ENCODE measurements at regions of chr5 and their contacts with region 1.

Region 1: DNA sequence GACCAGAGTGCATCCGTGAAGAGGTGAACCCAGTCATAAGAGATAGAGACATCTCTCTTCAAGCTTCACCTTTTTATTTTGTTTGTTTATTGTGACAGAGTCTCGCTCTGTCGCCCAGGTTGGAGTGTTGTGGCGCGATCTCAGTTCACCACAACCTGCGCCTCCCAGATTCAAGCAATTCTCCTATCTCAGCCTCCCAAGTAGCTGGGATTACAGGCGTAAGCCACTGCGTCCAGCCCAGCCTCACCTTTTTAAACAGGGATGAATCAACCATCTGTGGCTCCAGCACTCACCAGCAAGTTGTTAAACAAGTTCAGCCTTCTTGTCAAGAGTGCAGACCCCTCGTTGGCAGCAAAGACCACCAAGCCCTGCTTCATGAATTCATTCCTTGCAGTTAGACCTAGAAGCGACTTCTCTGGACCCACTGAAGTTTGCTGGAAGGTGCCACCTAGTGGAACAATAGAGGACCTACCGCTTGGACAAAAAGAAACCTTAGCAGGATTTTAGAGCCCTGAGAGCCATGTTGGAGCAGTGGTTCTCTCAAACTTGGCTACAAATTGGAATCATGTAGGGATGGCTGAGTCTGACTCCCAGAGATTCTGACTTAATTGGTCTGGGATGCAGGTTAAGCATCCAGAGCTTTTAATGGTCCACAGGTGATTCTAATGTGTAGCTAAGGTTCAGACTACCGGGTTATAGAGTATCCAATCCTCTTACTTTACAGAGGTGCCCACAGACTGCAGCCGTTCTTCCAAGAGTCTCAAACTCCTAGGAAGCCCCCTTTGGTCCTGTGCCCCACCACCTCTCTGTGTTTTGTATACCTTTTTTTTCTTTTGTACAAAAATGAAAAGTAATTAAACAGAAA is 10.5 kb upstream of the GALNT10 start:
- DNase-seq: peak; percentile 64
- H3K4me3 ChIP-seq: no peak overlapping the region
- H3K27ac ChIP-seq: no peak overlapping the region
- H3K4me1 ChIP-seq: peaks cover 9% of the 10 kb centered on the region
- H3K27me3 ChIP-seq: peaks cover 15 to 24% of the 10 kb centered on the region in 2 experiments
- CTCF ChIP-seq: peak; percentile 76 to 80
- POLR2A ChIP-seq: no peak

Region 2: DNA sequence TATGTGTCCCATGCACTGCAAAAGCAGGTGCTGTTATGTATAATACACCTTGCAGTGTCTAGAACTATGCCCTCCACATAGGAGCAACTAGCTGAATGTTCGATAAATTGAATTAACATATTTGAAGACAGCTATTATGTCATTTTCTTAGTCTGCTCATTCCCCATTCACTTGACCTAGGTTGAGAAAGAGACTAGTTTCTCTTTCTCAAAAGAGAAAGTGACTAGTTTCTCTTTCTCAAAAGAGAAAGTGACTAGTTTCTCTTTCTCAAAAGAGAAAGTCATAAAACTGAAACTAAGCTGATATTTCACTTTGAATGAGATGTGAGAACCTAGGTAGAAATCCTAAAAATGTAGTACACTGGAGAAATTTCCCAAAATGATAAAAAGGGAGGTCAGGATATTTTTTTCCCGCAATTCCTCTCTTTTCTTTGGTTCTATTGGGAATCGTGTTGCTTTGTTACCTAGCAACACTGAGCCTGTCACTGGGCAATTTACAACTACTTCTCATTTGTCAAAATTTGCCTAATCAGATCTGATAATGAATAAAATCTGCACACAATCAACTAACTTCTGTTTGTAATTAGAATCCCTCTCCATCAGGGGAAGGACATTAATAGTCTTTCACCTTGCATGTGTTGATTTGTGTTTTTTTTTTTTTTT is 821.6 kb before region 1 on chr5:
- CTCF ChIA-PET with region 1: no interaction called
- POLR2A ChIA-PET with region 1: no interaction called
- dilution Hi-C with region 1: no loop called
- intact Hi-C with region 1: no loop called
- DNase-seq: no peak
- H3K4me3 ChIP-seq: no peak overlapping the region
- H3K27ac ChIP-seq: no peak overlapping the region
- H3K4me1 ChIP-seq: no peaks in the 10 kb centered on the region
- H3K27me3 ChIP-seq: no peaks in the 10 kb centered on the region
- CTCF ChIP-seq: no peak
- POLR2A ChIP-seq: no peak

Region 3: GRCh38 chr5:154077696-154078095 is 102.4 kb before region 1 on chr5:
- CTCF ChIA-PET with region 1: interaction called, 75 read pairs
- POLR2A ChIA-PET with region 1: no interaction called
- dilution Hi-C with region 1: no loop called
- intact Hi-C with region 1: loop called (anchors 1 kb)
- DNase-seq: no peak
- H3K4me3 ChIP-seq: no peak overlapping the region
- H3K27ac ChIP-seq: no peak overlapping the region
- H3K4me1 ChIP-seq: no peaks in the 10 kb centered on the region
- H3K27me3 ChIP-seq: peaks cover 0 to 4% of the 10 kb centered on the region in 2 experiments
- CTCF ChIP-seq: no peak
- POLR2A ChIP-seq: no peak